WTC11 (cell line): ENCODE measurements at regions of chr10 and their contacts with region 1.

Region 1: DNA sequence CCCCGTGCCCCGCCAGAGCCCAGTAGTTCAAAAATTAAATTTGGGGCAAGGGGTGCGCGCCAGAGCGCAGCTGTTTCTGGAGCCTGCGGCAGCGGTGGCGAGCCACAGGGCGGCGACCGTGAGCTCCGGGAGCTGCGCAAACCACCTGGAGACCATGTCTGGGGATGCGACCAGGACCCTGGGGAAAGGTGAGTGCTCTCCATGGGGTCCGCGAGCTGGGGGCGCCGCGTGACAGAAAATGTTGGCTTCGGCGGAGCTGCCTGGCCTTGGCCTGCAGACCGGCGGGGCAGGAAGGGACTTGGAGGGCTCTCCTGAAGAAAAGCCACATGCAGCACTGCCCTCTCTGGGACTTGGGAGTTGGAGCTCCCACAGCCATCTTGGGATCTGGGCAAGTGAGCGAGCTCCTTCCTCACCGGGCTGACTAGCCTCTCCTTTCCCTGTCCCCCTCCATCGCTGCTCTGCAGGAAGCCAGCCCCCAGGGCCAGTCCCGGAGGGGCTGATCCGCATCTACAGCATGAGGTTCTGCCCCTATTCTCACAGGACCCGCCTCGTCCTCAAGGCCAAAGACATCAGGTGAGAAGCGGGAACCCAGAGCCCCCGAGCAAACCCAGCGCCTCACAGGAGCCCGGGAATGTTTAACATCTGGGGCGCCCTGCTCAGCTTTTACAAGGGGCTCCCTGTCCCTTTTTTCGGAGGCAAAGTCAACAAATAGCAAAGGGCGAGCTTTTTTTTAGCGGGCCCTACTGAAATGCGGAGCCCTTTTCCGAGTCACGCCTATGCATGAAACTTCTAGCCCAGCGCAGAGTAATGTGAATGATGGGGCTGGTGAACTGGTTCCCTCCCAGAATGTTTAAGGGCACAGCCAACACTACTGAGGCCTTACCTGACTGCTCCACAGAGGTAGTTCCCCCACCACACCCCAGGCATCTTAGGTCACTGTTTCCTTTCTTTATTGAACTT is 6.1 kb downstream of the GSTO2 start:
- DNase-seq: peak; percentile 79
- ATAC-seq: peak; percentile 94
- H3K4me3 Mint-ChIP-seq: peak overlapping the region; percentile 70
- H3K27ac Mint-ChIP-seq: no peak overlapping the region
- H3K4me1 Mint-ChIP-seq: peaks cover 10% of the 10 kb centered on the region
- H3K27me3 Mint-ChIP-seq: peaks cover 12% of the 10 kb centered on the region
- CTCF ChIP-seq: peak; percentile 71

Region 2: GRCh38 chr10:104028146-104028545 is 246.9 kb before region 1 on chr10:
- CTCF ChIA-PET with region 1: interaction called, 17 read pairs
- POLR2A ChIA-PET with region 1: no interaction called
- DNase-seq: peak; percentile 52
- ATAC-seq: peak; percentile 96
- H3K4me3 Mint-ChIP-seq: no peak overlapping the region
- H3K27ac Mint-ChIP-seq: no peak overlapping the region
- H3K4me1 Mint-ChIP-seq: peaks cover 20% of the 10 kb centered on the region
- H3K27me3 Mint-ChIP-seq: no peaks in the 10 kb centered on the region
- CTCF ChIP-seq: no peak

Region 3: DNA sequence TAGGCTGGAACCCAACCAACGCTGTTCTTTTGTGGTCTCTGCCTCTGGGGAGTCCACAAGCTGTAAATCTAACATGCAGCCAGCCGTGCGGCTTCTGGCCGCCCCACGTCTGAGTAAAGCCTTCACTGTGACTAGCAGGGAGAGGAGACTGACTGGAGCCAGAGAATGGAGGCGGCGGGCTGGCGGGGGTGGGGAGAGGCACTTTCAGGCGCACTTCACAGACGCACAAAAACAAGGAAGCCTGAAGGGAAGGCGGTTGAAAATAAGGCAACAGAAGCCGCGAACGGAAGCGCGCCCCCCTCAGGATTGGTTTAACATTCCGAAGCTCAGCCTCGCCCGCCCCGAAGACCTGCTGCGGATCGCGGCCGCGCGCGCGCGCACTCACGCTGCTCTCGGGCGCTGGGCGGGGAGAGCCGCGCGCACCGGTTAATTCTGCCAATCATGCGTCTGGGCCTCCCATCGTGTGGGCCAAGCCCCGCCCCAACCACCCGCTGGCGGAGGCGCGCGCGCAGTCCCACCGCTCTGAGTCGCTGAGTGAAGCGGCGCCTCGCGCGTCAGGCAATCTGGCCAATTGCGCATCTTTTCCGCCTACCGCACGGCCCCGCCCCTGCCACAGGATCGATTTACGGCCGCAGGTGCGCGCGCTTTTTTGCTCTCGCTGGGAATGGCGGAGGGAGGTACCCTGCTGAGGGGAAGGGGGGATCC is 153.4 kb before region 1 on chr10 and contains the start of gene SFR1:
- CTCF ChIA-PET with region 1: interaction called, 14 read pairs
- POLR2A ChIA-PET with region 1: interaction called, 3 read pairs
- DNase-seq: peak; percentile 99
- ATAC-seq: peak; percentile 92
- H3K4me3 Mint-ChIP-seq: peak within 1 kb of the TSS; percentile 92
- H3K27ac Mint-ChIP-seq: peak within 1 kb of the TSS; percentile 100
- H3K4me1 Mint-ChIP-seq: peaks cover 29% of the 10 kb centered on the region
- H3K27me3 Mint-ChIP-seq: no peaks in the 10 kb centered on the region; the same call in 1 of the 2 replicates
- CTCF ChIP-seq: 0 out of 2 replicates have a peak, but pooled peaks have one; percentile 42
- total RNA-seq, gene SFR1: 9.2 to 11.6 TPM (median 9.9 TPM) in 3 replicates

Region 4: GRCh38 chr10:104264783-104265182 is 10.3 kb before region 1 on chr10:
- CTCF ChIA-PET with region 1: no interaction called
- POLR2A ChIA-PET with region 1: no interaction called
- DNase-seq: no peak
- ATAC-seq: no peak
- H3K4me3 Mint-ChIP-seq: no peak overlapping the region
- H3K27ac Mint-ChIP-seq: no peak overlapping the region
- H3K4me1 Mint-ChIP-seq: peaks cover 11% of the 10 kb centered on the region
- H3K27me3 Mint-ChIP-seq: no peaks in the 10 kb centered on the region
- CTCF ChIP-seq: no peak

Region 5: DNA sequence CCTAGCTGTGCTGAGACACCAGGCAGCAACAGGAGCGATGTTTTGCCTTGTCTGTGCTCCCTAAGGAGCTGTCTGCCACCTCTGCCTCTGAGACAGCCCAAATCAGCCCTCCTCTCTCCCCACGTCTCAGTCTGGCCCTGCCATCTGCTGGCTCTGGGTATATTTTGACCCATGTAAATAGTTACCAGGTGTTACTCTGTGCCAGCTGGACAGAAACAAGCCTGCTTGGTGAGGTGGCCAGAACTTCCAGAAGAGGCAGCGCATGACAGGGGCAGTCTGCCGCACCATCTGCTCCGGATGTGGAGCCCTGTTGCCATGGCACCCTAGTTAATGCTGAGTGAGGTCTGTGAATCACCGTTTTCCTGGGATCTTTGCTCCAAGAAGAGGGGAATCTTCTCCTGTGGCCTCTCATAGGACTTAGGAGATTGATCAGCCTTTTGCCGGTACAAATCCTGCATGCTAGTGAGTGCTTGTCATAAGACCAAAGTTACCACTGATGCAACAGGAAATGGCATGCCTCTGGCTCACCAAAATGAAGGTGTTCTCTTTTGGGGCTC is 25.8 kb after region 1 on chr10:
- CTCF ChIA-PET with region 1: interaction called, 126 read pairs
- POLR2A ChIA-PET with region 1: no interaction called
- DNase-seq: no peak
- ATAC-seq: no peak
- H3K4me3 Mint-ChIP-seq: no peak overlapping the region
- H3K27ac Mint-ChIP-seq: no peak overlapping the region
- H3K4me1 Mint-ChIP-seq: peaks cover 15% of the 10 kb centered on the region
- H3K27me3 Mint-ChIP-seq: peaks cover 3% of the 10 kb centered on the region; the same call in 1 of the 2 replicates
- CTCF ChIP-seq: no peak

Region 6: DNA sequence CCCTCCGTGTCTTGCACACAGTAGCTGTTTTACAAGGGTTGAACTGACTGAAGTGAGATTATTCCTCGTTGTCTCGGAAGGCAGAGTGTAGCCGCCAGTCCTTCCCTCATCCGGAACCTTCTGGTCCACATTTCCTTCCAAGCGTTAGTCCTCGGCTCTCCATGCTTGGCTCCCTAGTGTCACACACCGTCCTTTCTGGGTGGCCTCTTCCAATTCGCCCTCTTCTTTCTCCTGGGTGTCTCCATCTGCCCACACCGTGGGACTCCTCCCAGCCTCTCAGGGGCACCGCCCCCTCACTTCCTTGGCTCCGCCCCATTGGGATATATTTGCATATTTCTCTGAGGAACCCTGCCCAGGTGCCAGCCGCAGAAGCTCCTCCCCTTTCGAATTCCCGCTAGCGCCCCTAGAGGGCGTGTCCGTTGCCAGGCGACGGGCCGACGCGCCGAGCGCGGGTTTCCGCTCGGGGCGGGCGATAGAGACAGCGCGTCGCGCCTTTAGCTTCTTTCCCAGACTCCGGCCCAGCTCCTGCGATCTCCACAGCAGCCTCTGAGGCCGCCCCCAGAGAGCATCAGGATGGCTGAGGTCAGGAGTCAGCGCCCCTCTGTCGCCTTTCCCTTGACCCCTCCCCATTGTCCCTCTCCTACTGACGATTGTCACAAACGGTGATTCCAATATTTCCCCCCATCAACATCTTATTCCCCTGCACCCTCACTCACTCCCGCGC is 78.4 kb after region 1 on chr10 and contains the start of gene CFAP58:
- CTCF ChIA-PET with region 1: interaction called, 60 read pairs
- POLR2A ChIA-PET with region 1: no interaction called
- DNase-seq: peak; percentile 98
- ATAC-seq: peak; percentile 96
- H3K4me3 Mint-ChIP-seq: no peak within 1 kb of the TSS
- H3K27ac Mint-ChIP-seq: no peak within 1 kb of the TSS
- H3K4me1 Mint-ChIP-seq: peaks cover 9% of the 10 kb centered on the region
- H3K27me3 Mint-ChIP-seq: peaks cover 10% of the 10 kb centered on the region
- CTCF ChIP-seq: peak; percentile 73
- total RNA-seq, gene CFAP58: 0.92 to 1.1 TPM (median 1.0 TPM) in 3 replicates

Region 7: DNA sequence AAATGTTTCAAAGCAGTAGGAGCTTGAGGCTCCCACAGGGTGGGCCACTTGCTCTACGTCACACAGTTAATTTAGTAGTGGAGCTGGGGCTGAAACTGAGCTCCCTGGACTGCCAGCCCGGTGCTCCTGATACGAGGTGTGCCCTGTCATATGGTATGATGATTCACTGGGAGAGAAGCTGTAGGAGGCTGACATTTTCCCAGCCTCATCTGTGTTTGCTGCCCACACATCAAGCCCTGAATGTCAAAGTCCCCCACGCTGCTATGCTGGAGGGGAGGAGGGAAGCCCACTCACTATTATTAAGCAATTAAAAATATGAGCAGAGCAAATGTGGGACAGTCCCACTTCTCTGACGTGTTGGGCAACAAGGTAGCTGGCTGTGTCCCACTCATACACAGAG is 284.9 kb after region 1 on chr10:
- CTCF ChIA-PET with region 1: no interaction called
- POLR2A ChIA-PET with region 1: no interaction called
- DNase-seq: no peak
- ATAC-seq: no peak
- H3K4me3 Mint-ChIP-seq: no peak overlapping the region
- H3K27ac Mint-ChIP-seq: no peak overlapping the region
- H3K4me1 Mint-ChIP-seq: no peaks in the 10 kb centered on the region
- H3K27me3 Mint-ChIP-seq: peaks cover 2% of the 10 kb centered on the region; the same call in 1 of the 2 replicates
- CTCF ChIP-seq: no peak